Sigmoid colon (tissue), 7 donors: ENCODE measurements at regions of chr1 and their contacts with region 1.

Region 1: GRCh38 chr1:228664399-228664914 is 70.8 kb upstream of the RHOU start:
- DNase-seq: peak; percentile 84
- H3K4me3 ChIP-seq: no peak overlapping the region
- H3K27ac ChIP-seq: no peak overlapping the region
- H3K4me1 ChIP-seq: no peaks in the 10 kb centered on the region
- H3K27me3 ChIP-seq: peaks cover 0 to 3% (median 0%) of the 10 kb centered on the region in 3 donors
- CTCF ChIP-seq: peak; percentile 52 to 89 (median 74)
- EP300 ChIP-seq: no peak
- POLR2A ChIP-seq: no peak

Region 2: DNA sequence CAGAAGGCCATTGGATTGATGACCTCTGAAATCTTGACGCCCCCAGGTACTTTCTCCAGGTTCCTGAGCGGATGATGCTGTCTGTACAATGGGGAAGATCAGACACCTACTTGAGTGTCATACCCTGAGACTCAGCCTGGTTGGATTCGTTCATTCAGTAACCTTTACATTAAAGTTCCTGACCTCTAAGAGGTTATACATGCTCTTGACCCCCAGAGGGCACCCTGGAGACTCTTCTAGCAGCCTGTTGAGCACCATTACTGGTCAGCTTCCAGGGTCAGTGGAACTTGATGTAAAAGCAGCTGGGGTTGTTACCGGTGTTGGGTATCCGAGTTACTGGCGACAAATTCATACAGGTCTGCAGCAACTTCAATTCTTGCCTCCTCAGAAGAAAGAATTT is 1215.4 kb before region 1 on chr1:
- intact Hi-C with region 1: no loop called
- DNase-seq: no peak
- H3K4me3 ChIP-seq: no peak overlapping the region
- H3K27ac ChIP-seq: no peak overlapping the region
- H3K4me1 ChIP-seq: no peaks in the 10 kb centered on the region
- H3K27me3 ChIP-seq: peaks cover 0 to 4% (median 0%) of the 10 kb centered on the region in 3 donors
- CTCF ChIP-seq: no peak
- EP300 ChIP-seq: no peak
- POLR2A ChIP-seq: no peak

Region 3: DNA sequence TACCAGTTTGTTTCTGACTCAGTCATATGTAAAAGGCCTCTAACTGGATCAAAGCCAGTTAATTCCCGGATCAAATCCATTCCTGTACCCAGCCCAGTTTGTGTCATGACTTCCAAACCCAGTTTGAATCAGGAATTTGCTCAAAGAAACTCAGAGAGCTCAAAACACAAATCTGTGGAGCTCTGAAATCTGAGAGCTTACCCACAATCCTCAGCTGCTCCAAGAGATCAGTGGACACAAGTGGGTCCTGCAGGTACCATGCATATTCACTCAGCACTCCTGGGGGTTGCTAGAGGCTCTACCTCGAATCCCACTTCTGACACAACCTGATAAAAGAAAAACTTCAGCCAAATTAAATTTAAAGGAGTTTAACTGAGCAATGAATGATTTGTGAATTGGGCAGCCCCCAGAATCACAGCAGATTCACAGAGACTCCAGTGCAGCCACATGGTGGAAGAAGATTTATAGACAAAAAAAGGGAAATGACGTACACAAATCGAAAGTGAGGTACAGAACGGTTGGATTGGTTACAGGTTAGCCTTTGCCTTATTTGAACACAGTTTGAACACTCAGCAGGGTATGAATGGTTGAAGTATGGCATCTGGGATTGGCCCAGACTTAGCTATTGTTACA is 543.5 kb before region 1 on chr1:
- intact Hi-C with region 1: no loop called
- DNase-seq: no peak
- H3K4me3 ChIP-seq: no peak overlapping the region
- H3K27ac ChIP-seq: no peak overlapping the region
- H3K4me1 ChIP-seq: no peaks in the 10 kb centered on the region
- H3K27me3 ChIP-seq: no peaks in the 10 kb centered on the region
- CTCF ChIP-seq: no peak
- EP300 ChIP-seq: no peak
- POLR2A ChIP-seq: no peak

Region 4: GRCh38 chr1:228830954-228831481 is 166.6 kb after region 1 on chr1:
- intact Hi-C with region 1: no loop called
- DNase-seq: no peak
- H3K4me3 ChIP-seq: no peak overlapping the region
- H3K27ac ChIP-seq: peak overlapping the region in 3 of 4 donors; percentile 42 to 72 (median 54)
- H3K4me1 ChIP-seq: peaks cover 0 to 26% (median 19%) of the 10 kb centered on the region in 4 donors
- H3K27me3 ChIP-seq: no peaks in the 10 kb centered on the region
- CTCF ChIP-seq: no peak
- EP300 ChIP-seq: no peak
- POLR2A ChIP-seq: no peak

Region 5: DNA sequence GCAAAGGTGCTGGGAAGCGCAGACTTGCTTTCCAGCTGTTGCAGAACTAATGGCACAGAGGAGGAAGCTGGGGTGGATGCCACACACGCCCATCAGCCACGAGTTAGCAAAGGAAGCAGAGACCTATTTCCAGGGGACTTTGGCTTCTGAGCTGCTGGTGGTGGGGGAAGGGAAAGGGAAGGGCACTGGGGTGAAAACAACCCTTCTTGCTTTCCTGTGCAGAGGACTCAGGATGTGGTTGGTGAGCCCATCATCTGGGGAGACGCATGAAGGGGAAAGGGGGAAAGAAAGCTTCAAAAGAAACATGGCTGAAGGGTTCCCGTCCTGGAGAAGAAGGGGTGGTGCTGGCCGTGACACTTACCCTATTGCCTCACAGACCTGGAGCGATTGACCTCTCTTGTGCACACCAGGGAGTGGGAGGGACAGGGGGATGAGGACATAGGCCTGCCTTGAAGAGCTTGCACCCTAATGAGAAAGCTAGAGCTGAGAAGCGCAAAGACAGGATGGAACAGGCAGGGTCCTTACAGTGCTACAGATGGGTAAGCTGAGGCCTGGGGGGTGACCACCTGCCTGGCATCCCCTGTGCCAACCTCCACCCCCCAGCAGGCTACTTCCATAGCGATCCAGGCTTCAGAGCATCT is 465.7 kb after region 1 on chr1:
- intact Hi-C with region 1: no loop called
- DNase-seq: peak; percentile 71
- H3K4me3 ChIP-seq: no peak overlapping the region
- H3K27ac ChIP-seq: no peak overlapping the region
- H3K4me1 ChIP-seq: no peaks in the 10 kb centered on the region
- H3K27me3 ChIP-seq: no peaks in the 10 kb centered on the region
- CTCF ChIP-seq: no peak
- EP300 ChIP-seq: no peak
- POLR2A ChIP-seq: no peak

Region 6: DNA sequence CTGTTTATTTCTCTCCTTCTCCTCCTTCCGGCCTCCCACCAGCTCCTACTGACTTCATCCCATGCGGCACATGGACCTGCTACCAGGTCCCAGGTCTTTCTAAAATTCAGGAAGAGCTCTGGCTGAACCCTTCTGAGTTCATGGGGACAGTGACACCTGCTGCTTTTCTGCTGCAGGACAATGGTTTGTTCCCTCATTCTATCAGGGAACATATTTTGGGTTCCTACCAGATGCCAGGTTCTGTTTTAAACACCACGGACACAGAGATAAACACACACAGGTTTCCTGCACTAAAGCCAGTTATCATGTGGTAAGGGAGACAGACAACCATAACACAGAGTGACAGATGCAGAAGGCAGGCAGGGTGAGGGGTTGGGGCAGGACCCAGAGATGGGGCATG is 492.4 kb after region 1 on chr1:
- intact Hi-C with region 1: loop called (anchors 5 kb)
- DNase-seq: peak; percentile 75
- H3K4me3 ChIP-seq: no peak overlapping the region
- H3K27ac ChIP-seq: peak overlapping the region in 1 of 4 donors; percentile 33
- H3K4me1 ChIP-seq: peaks cover 0 to 24% (median 0%) of the 10 kb centered on the region in 4 donors
- H3K27me3 ChIP-seq: no peaks in the 10 kb centered on the region
- CTCF ChIP-seq: peak; percentile 42 to 62 (median 48)
- EP300 ChIP-seq: no peak
- POLR2A ChIP-seq: no peak